ENCODE measurements at regions of chr7 and their contacts with region 1.

Region 1: DNA sequence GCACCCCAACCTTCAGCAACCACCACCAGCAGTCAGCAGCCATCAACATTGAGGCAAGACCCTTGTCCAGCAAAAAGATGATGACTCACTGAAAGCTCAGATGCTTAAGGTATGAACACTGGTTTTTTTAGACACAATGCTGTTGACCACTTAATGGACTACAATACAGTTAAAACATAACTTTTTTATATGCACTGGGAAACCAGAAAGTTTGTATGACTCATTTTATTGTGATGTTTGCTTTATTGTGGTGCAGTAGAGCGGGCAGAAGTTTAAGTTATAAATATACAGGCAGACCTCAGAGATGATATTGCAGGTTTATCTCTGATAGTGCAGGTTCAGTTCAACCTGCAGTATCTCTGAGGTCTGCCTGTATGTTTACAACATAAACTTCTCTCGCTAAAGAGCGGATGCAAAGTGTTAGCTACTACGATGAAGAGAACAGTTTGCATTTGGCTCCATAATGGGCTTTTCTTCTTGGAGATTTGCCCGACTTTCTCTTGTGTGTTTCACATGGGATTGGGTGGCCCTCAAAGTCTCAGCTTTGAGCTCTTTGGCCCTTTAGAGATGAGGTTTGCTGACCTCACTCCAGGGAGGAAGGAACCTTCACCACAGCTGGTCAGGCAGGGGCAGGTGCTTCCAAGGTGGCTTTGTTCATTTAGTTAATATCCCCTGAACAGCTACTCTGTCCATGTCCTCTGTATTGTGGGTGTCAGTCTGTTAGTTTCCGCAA is 84.4 kb upstream of the SHH start:
- DNase-seq: no peak
- H3K4me3 ChIP-seq: no peak overlapping the region
- H3K27ac ChIP-seq: no peak overlapping the region
- H3K4me1 ChIP-seq: no peaks in the 10 kb centered on the region
- H3K27me3 ChIP-seq: no peaks in the 10 kb centered on the region
- CTCF ChIP-seq: no peak
- POLR2A ChIP-seq: no peak

Region 2: GRCh38 chr7:155836216-155837130 is 60.2 kb before region 1 on chr7:
- intact Hi-C with region 1: loop called (anchors 10 kb)
- DNase-seq: no peak
- H3K4me3 ChIP-seq: no peak overlapping the region
- H3K27ac ChIP-seq: no peak overlapping the region
- H3K4me1 ChIP-seq: no peaks in the 10 kb centered on the region
- H3K27me3 ChIP-seq: no peaks in the 10 kb centered on the region
- CTCF ChIP-seq: no peak
- POLR2A ChIP-seq: no peak